ENCODE measurements at regions of chr11 and their contacts with region 1.

Region 1: DNA sequence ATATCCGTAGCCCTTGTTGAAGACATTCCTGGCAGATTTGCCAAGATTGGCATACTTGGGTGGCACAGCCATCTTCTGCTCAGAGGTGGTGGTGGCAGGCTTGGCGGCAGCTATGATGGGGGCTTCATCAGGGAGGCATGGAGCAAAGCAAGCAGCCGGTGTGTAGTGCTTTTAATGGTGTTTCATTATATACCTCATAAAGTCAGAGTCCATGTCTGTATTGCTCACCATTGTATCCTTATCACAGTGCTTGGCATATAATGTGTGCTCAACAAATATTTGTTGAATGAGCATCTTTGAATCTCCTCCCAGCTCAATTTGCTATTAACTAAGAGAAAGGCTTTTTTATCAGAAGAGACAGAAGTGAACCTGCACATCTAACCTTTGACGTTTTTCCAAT is 7.8 kb upstream of the DNHD1 start:
- DNase-seq: no peak
- ATAC-seq: no peak
- H3K4me3 Mint-ChIP-seq: no peak overlapping the region
- H3K27ac Mint-ChIP-seq: no peak overlapping the region
- H3K4me1 Mint-ChIP-seq: no peaks in the 10 kb centered on the region
- H3K27me3 Mint-ChIP-seq: no peaks in the 10 kb centered on the region
- CTCF ChIP-seq: no peak

Region 2: DNA sequence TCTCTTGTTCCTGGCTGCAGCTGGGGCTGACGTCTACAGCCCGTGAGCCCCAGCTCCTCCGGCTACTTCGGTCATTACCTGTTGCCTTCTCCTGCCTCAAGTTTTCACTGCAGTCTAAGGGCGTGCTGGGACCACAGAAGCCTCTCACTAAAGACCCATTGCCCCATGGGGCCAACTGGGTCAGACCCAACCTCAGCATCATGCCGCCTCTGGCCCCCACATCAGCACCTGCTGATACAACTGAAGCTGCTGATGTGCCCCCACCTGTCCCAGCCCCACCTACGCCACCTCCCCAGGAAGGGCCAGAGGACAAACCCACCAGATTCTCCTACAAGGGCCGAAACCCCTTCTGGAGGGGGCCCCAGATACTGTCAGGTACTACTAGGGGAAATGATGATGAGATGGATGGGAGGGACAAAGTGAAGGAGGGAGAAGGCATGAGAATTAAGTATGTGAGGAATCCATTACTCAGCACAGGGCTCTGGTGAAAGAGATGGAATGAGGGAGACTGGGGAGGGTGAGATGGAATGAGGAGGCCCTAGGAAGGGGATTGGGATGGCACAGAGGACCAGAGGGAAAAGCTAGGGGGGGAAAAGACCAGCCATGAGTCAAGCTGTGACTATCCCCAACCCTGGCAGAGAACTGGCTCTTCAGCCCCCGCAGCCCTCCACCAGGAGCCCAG is 278.9 kb before region 1 on chr11:
- CTCF ChIA-PET with region 1: no interaction called
- POLR2A ChIA-PET with region 1: no interaction called
- DNase-seq: no peak
- ATAC-seq: no peak
- H3K4me3 Mint-ChIP-seq: no peak overlapping the region
- H3K27ac Mint-ChIP-seq: no peak overlapping the region
- H3K4me1 Mint-ChIP-seq: no peaks in the 10 kb centered on the region
- H3K27me3 Mint-ChIP-seq: no peaks in the 10 kb centered on the region
- CTCF ChIP-seq: no peak

Region 3: GRCh38 chr11:6505577-6506240 is 16.4 kb after region 1 on chr11:
- CTCF ChIA-PET with region 1: interaction called, 12 read pairs
- POLR2A ChIA-PET with region 1: no interaction called
- DNase-seq: no peak
- ATAC-seq: peak; percentile 89
- H3K4me3 Mint-ChIP-seq: no peak overlapping the region
- H3K27ac Mint-ChIP-seq: peak overlapping the region; percentile 8; the same call in 1 of the 2 replicates
- H3K4me1 Mint-ChIP-seq: no peaks in the 10 kb centered on the region
- H3K27me3 Mint-ChIP-seq: no peaks in the 10 kb centered on the region
- CTCF ChIP-seq: peak; percentile 53; the same call in 1 of the 2 replicates

Region 4: DNA sequence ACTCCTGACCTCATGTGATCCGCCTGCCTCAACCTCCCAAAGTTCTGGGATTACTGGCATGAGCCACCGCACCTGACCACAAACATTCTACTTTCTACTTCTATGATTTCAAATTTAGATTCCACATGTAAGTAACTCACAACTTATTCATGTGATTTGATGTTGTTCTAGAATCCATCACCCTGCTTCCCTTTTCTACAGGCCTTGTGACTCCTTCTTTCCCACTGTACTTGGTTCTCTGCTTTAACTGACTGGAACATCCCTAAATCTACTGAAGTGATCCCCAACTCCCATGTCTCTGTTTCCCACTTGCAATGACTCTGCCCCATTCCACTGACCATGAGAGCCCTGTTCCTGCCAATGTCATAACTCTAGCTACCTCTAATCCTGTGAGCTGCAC is 219.6 kb after region 1 on chr11:
- CTCF ChIA-PET with region 1: no interaction called
- POLR2A ChIA-PET with region 1: no interaction called
- DNase-seq: no peak
- ATAC-seq: no peak
- H3K4me3 Mint-ChIP-seq: no peak overlapping the region
- H3K27ac Mint-ChIP-seq: no peak overlapping the region
- H3K4me1 Mint-ChIP-seq: no peaks in the 10 kb centered on the region
- H3K27me3 Mint-ChIP-seq: peaks cover 12% of the 10 kb centered on the region
- CTCF ChIP-seq: no peak